Thyroid gland (tissue), 4 donors: ENCODE measurements at regions of chr14 and their contacts with region 1.

Region 1: GRCh38 chr14:62126879-62127478 is 364.8 kb downstream of the SNAPC1 start:
- DNase-seq: no peak
- H3K4me3 ChIP-seq: no peak overlapping the region
- H3K27ac ChIP-seq: no peak overlapping the region
- H3K4me1 ChIP-seq: no peaks in the 10 kb centered on the region
- H3K27me3 ChIP-seq: no peaks in the 10 kb centered on the region
- CTCF ChIP-seq: peak; percentile 36 to 86 (median 70)
- POLR2A ChIP-seq: no peak

Region 2: GRCh38 chr14:61894452-61895077 is 232.4 kb before region 1 on chr14:
- intact Hi-C with region 1: loop called (anchors 10 kb)
- DNase-seq: peak; percentile 74 to 78
- H3K4me3 ChIP-seq: no peak overlapping the region
- H3K27ac ChIP-seq: no peak overlapping the region
- H3K4me1 ChIP-seq: no peaks in the 10 kb centered on the region
- H3K27me3 ChIP-seq: no peaks in the 10 kb centered on the region
- CTCF ChIP-seq: peak; percentile 29 to 61 (median 46)
- POLR2A ChIP-seq: no peak

Region 3: GRCh38 chr14:61925043-61925442 is 201.9 kb before region 1 on chr14:
- intact Hi-C with region 1: loop called (anchors 10 kb)
- DNase-seq: peak; percentile 30 to 48
- H3K4me3 ChIP-seq: no peak overlapping the region
- H3K27ac ChIP-seq: no peak overlapping the region
- H3K4me1 ChIP-seq: no peaks in the 10 kb centered on the region
- H3K27me3 ChIP-seq: no peaks in the 10 kb centered on the region
- CTCF ChIP-seq: peak in 3 of 6 experiments; percentile 25 to 53 (median 42)
- POLR2A ChIP-seq: no peak

Region 4: DNA sequence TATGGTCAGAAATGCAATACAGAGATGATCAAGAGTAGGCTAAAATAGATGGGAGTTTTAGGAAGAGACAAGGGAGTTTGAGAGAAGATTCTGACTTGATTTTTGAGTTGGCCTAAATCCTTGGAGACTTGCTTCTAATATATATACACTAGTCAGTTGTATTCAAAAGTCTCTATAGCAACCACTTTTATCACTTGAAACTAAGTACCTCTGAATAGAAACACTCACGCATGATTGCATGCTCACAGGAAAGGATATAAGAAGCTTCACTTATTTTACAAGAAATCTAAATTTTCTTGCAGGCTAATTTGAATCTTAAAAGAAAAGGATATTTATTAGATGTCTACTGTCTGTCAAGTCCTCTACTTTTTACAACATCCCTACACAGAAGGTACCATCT is 47.9 kb before region 1 on chr14:
- intact Hi-C with region 1: no loop called
- DNase-seq: no peak
- H3K4me3 ChIP-seq: no peak overlapping the region
- H3K27ac ChIP-seq: no peak overlapping the region
- H3K4me1 ChIP-seq: no peaks in the 10 kb centered on the region
- H3K27me3 ChIP-seq: no peaks in the 10 kb centered on the region
- CTCF ChIP-seq: no peak
- POLR2A ChIP-seq: no peak